ENCODE measurements at regions of chr1 and their contacts with region 1.

Region 1: GRCh38 chr1:111619635-111620440 is at the start of gene RAP1A:
- DNase-seq: peak; percentile 91
- ATAC-seq: peak; percentile 79
- H3K4me3 ChIP-seq: peak within 1 kb of the TSS; percentile 63 to 94 (median 78)
- H3K4me3 Mint-ChIP-seq: peak within 1 kb of the TSS; percentile 98
- H3K27ac ChIP-seq: peak within 1 kb of the TSS; percentile 73 to 86
- H3K27ac Mint-ChIP-seq: peak within 1 kb of the TSS; percentile 94
- H3K4me1 ChIP-seq: peaks cover 73 to 79% of the 10 kb centered on the region in 2 donors
- H3K4me1 Mint-ChIP-seq: peaks cover 75% of the 10 kb centered on the region
- H3K27me3 ChIP-seq: no peaks in the 10 kb centered on the region
- H3K27me3 Mint-ChIP-seq: no peaks in the 10 kb centered on the region
- CTCF ChIP-seq: no peak
- total RNA-seq, gene RAP1A: 74.6 and 75.3 TPM in 2 replicates

Region 2: DNA sequence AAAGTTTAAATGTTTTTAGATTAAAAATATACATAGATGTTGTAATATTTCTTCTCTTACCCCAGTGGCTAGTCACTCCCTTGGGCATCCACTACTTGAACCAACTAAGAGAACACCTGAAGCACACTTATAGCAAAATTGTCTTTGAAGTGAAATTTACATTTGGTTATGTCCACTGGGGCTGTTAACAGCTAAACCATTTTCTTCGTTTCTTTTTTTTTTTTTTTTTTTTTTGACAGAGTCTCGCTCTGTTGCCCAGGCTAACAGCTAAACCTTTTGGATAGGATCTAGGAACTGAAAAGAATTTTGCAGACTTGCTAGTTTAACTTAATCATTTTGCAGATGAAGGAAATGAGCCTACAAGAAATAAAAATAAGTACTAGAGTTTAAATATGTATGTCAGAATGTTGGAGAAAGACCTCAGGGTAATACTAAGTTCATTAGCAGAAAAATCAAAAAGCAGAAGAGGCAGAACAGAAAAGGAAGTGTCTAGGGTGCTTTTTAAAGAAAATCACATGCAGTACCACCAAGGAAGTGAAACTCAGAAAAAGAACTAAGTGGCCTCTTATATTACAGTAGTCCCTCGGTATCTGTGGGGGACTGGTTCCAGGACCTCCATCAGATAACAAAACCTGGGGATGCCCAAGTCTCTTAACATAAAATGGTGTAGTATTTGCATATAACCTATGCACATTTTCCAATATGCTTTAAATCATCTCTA is 491.8 kb before region 1 on chr1:
- CTCF ChIA-PET with region 1: no interaction called
- POLR2A ChIA-PET with region 1: no interaction called
- intact Hi-C with region 1: loop called (anchors 10 kb)
- DNase-seq: peak; percentile 88
- ATAC-seq: peak; percentile 88
- H3K4me3 ChIP-seq: peak overlapping the region in 3 of 5 experiments; percentile 26 to 58 (median 31)
- H3K4me3 Mint-ChIP-seq: peak overlapping the region; percentile 36
- H3K27ac ChIP-seq: peak overlapping the region; percentile 95 to 98
- H3K27ac Mint-ChIP-seq: peak overlapping the region; percentile 72
- H3K4me1 ChIP-seq: peaks cover 79 to 93% of the 10 kb centered on the region in 2 donors
- H3K4me1 Mint-ChIP-seq: peaks cover 83% of the 10 kb centered on the region
- H3K27me3 ChIP-seq: no peaks in the 10 kb centered on the region
- H3K27me3 Mint-ChIP-seq: no peaks in the 10 kb centered on the region
- CTCF ChIP-seq: no peak

Region 3: GRCh38 chr1:111570781-111571181 is 49.1 kb before region 1 on chr1:
- CTCF ChIA-PET with region 1: interaction called, 7 read pairs
- POLR2A ChIA-PET with region 1: interaction called, 5 read pairs
- intact Hi-C with region 1: loop called (anchors 10 kb)
- DNase-seq: peak; percentile 48
- ATAC-seq: peak; percentile 43
- H3K4me3 ChIP-seq: no peak overlapping the region
- H3K4me3 Mint-ChIP-seq: no peak overlapping the region
- H3K27ac ChIP-seq: no peak overlapping the region
- H3K27ac Mint-ChIP-seq: peak overlapping the region; percentile 26
- H3K4me1 ChIP-seq: peaks cover 6 to 14% of the 10 kb centered on the region in 2 donors
- H3K4me1 Mint-ChIP-seq: peaks cover 15% of the 10 kb centered on the region
- H3K27me3 ChIP-seq: no peaks in the 10 kb centered on the region
- H3K27me3 Mint-ChIP-seq: no peaks in the 10 kb centered on the region
- CTCF ChIP-seq: peak; percentile 53

Region 4: GRCh38 chr1:111603979-111604378 is 15.9 kb before region 1 on chr1:
- CTCF ChIA-PET with region 1: interaction called, 8 read pairs
- POLR2A ChIA-PET with region 1: interaction called, 11 read pairs
- intact Hi-C with region 1: loop called (anchors 1 kb)
- DNase-seq: peak; percentile 57
- ATAC-seq: peak; percentile 71
- H3K4me3 ChIP-seq: no peak overlapping the region
- H3K4me3 Mint-ChIP-seq: peak overlapping the region; percentile 47
- H3K27ac ChIP-seq: peak overlapping the region; percentile 12 to 14
- H3K27ac Mint-ChIP-seq: peak overlapping the region; percentile 83
- H3K4me1 ChIP-seq: peaks cover 50 to 57% of the 10 kb centered on the region in 2 donors
- H3K4me1 Mint-ChIP-seq: peaks cover 64% of the 10 kb centered on the region
- H3K27me3 ChIP-seq: no peaks in the 10 kb centered on the region
- H3K27me3 Mint-ChIP-seq: no peaks in the 10 kb centered on the region
- CTCF ChIP-seq: no peak

Region 5: DNA sequence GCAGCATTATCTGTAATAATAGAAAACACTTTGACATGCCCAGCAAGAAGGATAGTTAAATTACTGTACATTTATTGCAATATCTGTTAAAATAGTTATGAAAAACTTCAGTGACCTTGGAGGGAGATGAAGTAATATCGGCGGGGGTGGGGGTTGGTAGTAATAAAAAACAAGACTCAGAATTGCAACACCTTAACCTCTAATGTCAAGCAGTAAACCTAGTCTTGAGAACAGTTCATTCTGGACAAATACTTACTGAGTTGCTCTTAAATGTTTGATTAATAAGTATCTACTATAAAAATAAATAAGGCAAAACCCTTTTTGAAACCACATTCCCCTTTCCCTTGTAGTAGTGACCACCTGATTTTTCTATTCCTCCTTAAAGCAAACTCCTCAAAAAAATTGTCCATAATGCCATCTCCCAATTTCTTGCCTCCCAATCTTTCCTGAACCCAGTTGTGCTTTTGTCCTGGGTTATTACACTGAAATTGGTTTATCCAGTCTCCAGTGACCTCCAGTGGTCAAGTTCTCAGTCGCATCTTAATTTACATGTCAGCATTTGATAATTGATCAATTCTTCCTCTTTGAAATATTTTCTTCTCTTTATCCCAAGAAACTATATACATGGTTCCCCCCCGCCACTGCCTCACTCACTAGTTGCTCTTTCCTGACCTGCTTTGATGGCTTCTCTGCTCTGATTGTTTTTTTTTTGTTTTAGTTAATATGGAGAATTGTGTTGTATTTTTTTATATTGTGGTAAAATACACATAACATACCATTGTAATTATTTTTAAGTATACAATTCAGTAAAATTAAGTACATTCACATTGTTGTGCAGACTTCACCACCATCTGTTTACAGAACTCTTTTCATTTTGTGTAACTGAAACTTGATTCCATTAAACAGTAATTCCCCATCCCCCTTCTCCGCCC is 36.5 kb after region 1 on chr1:
- CTCF ChIA-PET with region 1: no interaction called
- POLR2A ChIA-PET with region 1: no interaction called
- intact Hi-C with region 1: loop called (anchors 2 kb)
- DNase-seq: peak; percentile 66
- ATAC-seq: no peak
- H3K4me3 ChIP-seq: no peak overlapping the region
- H3K4me3 Mint-ChIP-seq: no peak overlapping the region
- H3K27ac ChIP-seq: no peak overlapping the region
- H3K27ac Mint-ChIP-seq: no peak overlapping the region
- H3K4me1 ChIP-seq: peaks cover 30 to 33% of the 10 kb centered on the region in 2 donors
- H3K4me1 Mint-ChIP-seq: peaks cover 37% of the 10 kb centered on the region
- H3K27me3 ChIP-seq: no peaks in the 10 kb centered on the region
- H3K27me3 Mint-ChIP-seq: no peaks in the 10 kb centered on the region
- CTCF ChIP-seq: peak; percentile 75